ENCODE measurements at regions of chr4 and their contacts with region 1.

Region 1: GRCh38 chr4:151760712-151761527 is at the start of gene GATB:
- DNase-seq: peak; percentile 96
- H3K4me3 ChIP-seq: peak within 1 kb of the TSS; percentile 65 to 91 (median 74)
- H3K27ac ChIP-seq: peak within 1 kb of the TSS; percentile 59 to 78 (median 72)
- H3K4me1 ChIP-seq: peaks cover 0 to 11% (median 7%) of the 10 kb centered on the region in 4 donors
- H3K27me3 ChIP-seq: no peaks in the 10 kb centered on the region
- CTCF ChIP-seq: peak in 3 of 4 experiments; percentile 12 to 44 (median 15)
- EP300 ChIP-seq: peak in 1 of 4 donors; percentile 59
- POLR2A ChIP-seq: peak in 1 of 2 donors; percentile 46
- total RNA-seq, gene GATB: 11.1 to 22.1 (median 17.6) TPM

Region 2: DNA sequence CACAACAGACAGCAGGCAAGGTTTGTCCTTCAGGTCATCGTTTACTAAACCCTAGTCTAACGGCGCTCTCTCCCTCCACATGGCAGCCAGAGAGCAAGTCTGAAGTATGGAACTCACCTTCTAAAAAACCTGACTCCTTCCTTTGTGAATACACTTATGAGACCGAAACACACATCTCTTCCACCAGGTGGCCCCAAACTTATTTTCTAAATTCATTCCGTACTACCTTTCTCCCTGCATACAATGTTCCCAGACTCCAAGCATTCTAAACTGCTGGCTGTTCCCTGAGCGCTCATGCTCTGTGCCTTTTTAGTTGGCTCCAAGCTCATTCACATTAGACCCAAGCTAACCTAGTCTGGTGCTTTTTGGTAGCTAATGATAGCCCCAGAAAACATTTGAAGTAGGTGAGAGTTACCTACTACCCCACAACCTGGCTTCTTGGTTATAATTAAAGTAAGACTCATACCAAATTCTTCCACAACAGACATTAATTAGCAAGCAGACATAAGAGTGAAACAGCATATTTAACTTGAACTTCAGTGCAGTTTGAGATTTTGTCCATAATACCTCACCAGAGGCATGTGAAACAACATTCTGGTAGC is 1750.3 kb before region 1 on chr4:
- intact Hi-C with region 1: loop called (anchors 5 kb)
- DNase-seq: no peak
- H3K4me3 ChIP-seq: no peak overlapping the region
- H3K27ac ChIP-seq: peak overlapping the region in 2 of 4 donors; percentile 16 to 35
- H3K4me1 ChIP-seq: peaks cover 0 to 32% (median 25%) of the 10 kb centered on the region in 4 donors
- H3K27me3 ChIP-seq: no peaks in the 10 kb centered on the region
- CTCF ChIP-seq: peak; percentile 22 to 66 (median 56)
- EP300 ChIP-seq: no peak
- POLR2A ChIP-seq: no peak

Region 3: GRCh38 chr4:151015459-151016347 is 745.2 kb before region 1 on chr4:
- intact Hi-C with region 1: loop called (anchors 5 kb)
- DNase-seq: peak; percentile 83
- H3K4me3 ChIP-seq: peak overlapping the region; percentile 90 to 99 (median 96)
- H3K27ac ChIP-seq: peak overlapping the region; percentile 86 to 91 (median 89)
- H3K4me1 ChIP-seq: peaks cover 0 to 19% (median 9%) of the 10 kb centered on the region in 4 donors
- H3K27me3 ChIP-seq: no peaks in the 10 kb centered on the region
- CTCF ChIP-seq: no peak
- EP300 ChIP-seq: no peak
- POLR2A ChIP-seq: peak; percentile 13 to 35

Region 4: DNA sequence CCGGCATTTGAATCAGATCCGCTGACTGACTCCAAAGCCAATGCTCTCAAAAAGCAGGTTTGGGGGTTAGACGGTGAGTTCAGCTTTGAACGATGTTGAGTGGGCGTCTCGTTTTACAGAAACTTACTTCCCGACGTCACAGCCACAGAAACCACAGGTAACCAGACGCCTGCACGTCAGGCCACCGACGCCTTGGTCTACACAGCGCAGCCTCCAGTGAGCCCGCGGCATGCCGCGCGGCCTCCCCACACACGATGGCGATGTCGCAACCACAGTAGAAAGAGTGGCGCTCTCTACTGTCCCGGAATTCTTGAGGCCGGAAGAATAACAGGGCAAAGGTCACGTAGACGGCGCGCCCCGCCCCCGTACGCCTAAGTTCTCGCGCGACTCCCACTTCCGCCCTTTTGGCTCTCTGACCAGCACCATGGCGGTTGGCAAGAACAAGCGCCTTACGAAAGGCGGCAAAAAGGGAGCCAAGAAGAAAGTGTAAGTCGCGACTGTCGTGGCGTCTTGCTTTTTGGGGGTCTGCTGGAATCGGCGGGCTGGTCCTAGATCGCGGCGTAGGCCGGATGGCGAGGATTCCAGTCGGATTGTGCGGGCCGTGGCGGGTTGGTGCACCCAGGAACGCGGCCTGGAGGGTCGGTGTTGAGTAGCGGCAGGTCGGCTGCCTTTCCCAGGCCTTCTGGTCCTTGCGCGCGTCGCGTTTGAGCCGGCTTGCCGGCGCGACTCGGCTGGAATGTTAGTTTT is 661.5 kb before region 1 on chr4 and contains the start of gene RPS3A:
- intact Hi-C with region 1: loop called (anchors 5 kb)
- DNase-seq: peak; percentile 98
- H3K4me3 ChIP-seq: peak within 1 kb of the TSS; percentile 67 to 76 (median 70)
- H3K27ac ChIP-seq: peak within 1 kb of the TSS; percentile 85 to 91 (median 88)
- H3K4me1 ChIP-seq: peaks cover 0 to 33% (median 23%) of the 10 kb centered on the region in 4 donors
- H3K27me3 ChIP-seq: no peaks in the 10 kb centered on the region
- CTCF ChIP-seq: peak; percentile 34 to 71 (median 40)
- EP300 ChIP-seq: peak in 1 of 4 donors; percentile 46
- POLR2A ChIP-seq: peak; percentile 54 to 78
- total RNA-seq, gene RPS3A: 4,012 to 6,800 (median 5,576) TPM

Region 5: DNA sequence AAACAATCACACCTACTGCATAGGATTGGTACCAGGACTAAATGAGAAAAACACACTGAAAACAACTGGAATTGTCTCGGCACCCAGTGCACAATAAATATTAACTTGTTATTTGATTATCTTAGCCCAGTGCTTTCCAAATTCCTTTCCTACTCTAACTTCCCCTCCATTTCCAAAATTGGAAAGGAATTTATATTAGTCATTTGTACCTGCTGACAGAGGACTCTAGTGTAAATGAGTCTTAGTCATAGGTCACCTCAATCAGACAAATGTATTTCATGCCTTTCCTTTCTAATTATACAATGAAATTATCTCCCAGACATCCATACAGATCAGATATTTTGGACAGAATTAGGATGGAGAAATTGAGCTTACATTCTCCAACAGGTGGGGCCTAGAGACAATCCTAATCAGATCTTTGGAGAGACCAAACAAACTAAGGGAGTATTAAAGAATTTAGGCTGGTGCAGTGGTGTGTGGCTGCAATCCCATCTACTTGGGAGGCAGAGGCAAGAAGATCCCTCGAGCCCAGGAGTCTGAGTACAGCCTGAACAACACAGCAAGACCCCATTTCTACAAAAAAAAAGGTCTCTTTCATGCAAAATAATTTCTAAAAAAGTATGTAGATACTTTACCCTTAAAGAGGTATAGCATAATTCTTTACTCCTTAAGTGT is 445.6 kb before region 1 on chr4:
- intact Hi-C with region 1: loop called (anchors 5 kb)
- DNase-seq: no peak
- H3K4me3 ChIP-seq: no peak overlapping the region
- H3K27ac ChIP-seq: peak overlapping the region; percentile 42 to 92 (median 66)
- H3K4me1 ChIP-seq: peaks cover 0 to 70% (median 56%) of the 10 kb centered on the region in 4 donors
- H3K27me3 ChIP-seq: no peaks in the 10 kb centered on the region
- CTCF ChIP-seq: no peak
- EP300 ChIP-seq: no peak
- POLR2A ChIP-seq: no peak

Region 6: GRCh38 chr4:151581570-151581969 is 179.3 kb before region 1 on chr4:
- intact Hi-C with region 1: no loop called
- DNase-seq: no peak
- H3K4me3 ChIP-seq: no peak overlapping the region
- H3K27ac ChIP-seq: no peak overlapping the region
- H3K4me1 ChIP-seq: no peaks in the 10 kb centered on the region
- H3K27me3 ChIP-seq: no peaks in the 10 kb centered on the region
- CTCF ChIP-seq: no peak
- EP300 ChIP-seq: no peak
- POLR2A ChIP-seq: no peak

Region 7: GRCh38 chr4:151674804-151675391 is 86.0 kb before region 1 on chr4:
- intact Hi-C with region 1: loop called (anchors 5 kb)
- DNase-seq: peak; percentile 79
- H3K4me3 ChIP-seq: peak overlapping the region; percentile 13 to 44 (median 35)
- H3K27ac ChIP-seq: peak overlapping the region in 3 of 4 donors; percentile 8 to 50 (median 49)
- H3K4me1 ChIP-seq: peaks cover 0 to 18% (median 16%) of the 10 kb centered on the region in 4 donors
- H3K27me3 ChIP-seq: no peaks in the 10 kb centered on the region
- CTCF ChIP-seq: peak in 1 of 4 experiments; percentile 31
- EP300 ChIP-seq: no peak
- POLR2A ChIP-seq: no peak

Measured in sigmoid colon (tissue), 7 donors.